ENCODE measurements at regions of chr11 and their contacts with region 1.

Region 1: DNA sequence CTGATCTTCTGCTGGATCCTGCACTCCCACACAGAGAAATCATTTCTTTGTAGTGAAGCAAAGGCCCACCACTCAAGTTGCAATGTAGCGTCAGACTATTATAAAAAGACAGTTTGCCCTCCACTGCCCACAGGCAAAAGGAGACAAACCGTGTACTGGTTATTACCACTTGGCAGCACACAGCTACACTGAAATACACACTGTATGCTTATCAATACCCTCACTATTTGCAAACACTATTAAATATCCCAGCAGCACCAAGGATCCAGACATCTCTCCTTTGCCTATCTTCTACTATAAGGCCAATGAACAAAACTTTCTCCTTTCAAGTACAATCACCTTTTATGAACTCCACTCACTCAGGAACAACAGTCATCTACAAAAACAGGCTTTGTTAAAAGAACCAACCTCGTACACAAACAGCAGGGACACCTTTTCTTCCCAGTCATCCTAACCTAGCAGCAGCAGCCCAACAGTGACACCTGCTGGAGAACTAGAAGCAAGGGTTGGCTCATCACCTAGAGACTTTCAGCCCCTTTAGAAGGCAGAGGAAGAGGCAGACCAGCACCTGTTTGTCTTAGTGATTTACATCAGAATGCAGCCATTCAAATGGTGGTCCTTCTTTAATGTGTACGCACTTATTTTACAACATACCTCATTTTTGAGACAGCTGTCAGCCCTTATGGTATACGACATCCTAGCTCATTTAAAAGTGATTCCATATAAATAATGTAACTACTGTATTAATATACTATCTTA is 56.1 kb downstream of the AMBRA1 start:
- DNase-seq: peak; percentile 44 to 55 (median 54)
- H3K4me3 ChIP-seq: no peak overlapping the region
- H3K4me3 Mint-ChIP-seq: no peak overlapping the region
- H3K27ac ChIP-seq: no peak overlapping the region
- H3K27ac Mint-ChIP-seq: peak overlapping the region in 1 of 7 donors; percentile 22
- H3K4me1 ChIP-seq: peaks cover 5 to 6% of the 10 kb centered on the region in 2 donors
- H3K4me1 Mint-ChIP-seq: peaks cover 19% of the 10 kb centered on the region
- H3K27me3 ChIP-seq: no peaks in the 10 kb centered on the region
- H3K27me3 Mint-ChIP-seq: peaks cover 0 to 5% (median 1%) of the 10 kb centered on the region in 3 donors
- CTCF ChIP-seq: peak; percentile 89

Region 2: DNA sequence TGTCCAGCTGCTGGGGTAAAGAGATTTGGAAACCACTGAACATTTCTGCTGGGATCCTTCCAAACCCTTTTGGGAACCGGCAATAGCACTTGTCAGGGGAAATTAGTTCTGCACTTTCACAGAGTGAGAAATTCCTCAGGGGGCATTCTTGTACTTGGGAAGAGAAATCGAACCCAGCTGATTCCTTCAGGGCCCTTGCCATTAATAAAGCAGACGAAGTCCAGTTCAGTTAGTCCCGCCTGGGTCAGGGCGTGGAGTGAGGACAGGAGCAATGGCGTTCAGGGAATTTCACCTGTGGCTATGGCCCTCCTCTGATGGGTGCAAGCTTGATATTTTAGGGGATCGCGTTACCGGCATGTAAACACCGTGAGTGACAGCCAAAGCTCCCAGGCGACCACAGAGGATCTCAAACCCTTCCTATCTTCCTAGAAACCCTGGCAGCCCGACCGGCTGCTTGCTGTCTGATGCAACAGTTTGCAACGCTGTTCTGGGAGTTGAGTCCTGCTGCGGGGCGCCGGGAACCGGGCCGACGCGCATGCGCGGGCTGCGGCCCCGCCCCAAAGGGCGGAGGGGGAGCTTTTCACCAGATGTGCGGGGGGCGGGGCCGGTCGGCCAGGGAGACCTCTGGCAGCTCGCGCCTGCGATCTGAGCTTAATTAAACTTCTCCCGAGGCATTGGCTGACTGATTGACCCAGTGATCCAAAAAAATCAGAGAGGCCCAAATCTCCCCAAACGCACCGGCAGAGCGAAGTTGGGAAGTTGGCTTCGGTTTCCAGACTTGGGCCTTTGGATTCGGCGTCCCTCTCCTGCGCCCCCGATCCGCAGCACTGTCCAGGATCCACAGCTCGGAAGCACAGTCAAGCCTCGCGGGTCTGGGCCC is 294.6 kb before region 1 on chr11:
- intact Hi-C with region 1: no loop called
- DNase-seq: peak; percentile 72 to 80 (median 77)
- H3K4me3 ChIP-seq: peak overlapping the region; percentile 18 to 83 (median 51)
- H3K4me3 Mint-ChIP-seq: peak overlapping the region; percentile 84 to 94
- H3K27ac ChIP-seq: peak overlapping the region in 1 of 2 donors; percentile 42
- H3K27ac Mint-ChIP-seq: peak overlapping the region in 5 of 7 donors; percentile 37 to 81 (median 50)
- H3K4me1 ChIP-seq: peaks cover 25 to 30% of the 10 kb centered on the region in 2 donors
- H3K4me1 Mint-ChIP-seq: peaks cover 29% of the 10 kb centered on the region
- H3K27me3 ChIP-seq: no peaks in the 10 kb centered on the region
- H3K27me3 Mint-ChIP-seq: peaks cover 0 to 4% (median 2%) of the 10 kb centered on the region in 3 donors
- CTCF ChIP-seq: no peak

Region 3: DNA sequence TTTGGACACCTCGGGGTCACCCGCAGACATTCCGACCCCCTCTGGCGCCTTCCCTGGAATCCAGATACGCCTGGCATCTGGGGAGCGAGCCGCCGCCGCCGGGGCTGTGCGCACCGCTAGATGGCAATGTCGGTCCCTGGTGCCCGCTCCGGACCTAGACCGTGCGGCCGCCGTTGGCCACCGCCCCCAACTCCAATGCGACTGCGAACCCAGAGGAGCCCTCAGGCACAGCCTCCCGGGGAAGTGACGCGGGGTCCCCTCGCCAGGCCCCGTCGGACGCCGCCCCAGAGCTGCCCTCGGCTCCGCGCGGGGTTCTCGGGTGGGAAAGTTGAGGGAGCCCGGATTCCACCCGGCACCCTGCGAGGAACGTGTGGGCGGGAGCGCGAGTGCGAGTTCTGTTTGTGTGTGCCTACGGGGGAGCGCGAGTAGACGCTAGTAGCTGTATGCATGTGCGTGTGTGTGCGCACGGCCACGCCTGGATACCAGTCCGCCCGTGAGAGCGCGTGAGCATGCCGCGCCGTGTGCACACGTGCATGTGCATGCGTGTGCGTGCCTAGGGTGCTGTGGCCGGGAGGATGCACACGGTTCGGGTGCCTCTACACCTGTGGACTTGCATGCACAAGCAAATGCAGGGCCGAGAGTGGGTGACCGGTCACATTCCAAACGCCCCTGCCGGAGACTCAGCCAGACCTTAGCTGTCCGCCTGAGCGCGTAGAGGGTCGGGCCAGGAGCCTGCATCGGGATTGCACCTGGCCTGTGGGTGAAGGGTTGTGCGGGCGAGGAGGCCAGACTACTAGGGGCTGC is 148.1 kb before region 1 on chr11:
- intact Hi-C with region 1: loop called (anchors 2 to 10 kb)
- DNase-seq: peak; percentile 38 to 54 (median 46)
- H3K4me3 ChIP-seq: peak overlapping the region in 1 of 3 experiments; percentile 62
- H3K4me3 Mint-ChIP-seq: peak overlapping the region; percentile 47 to 86
- H3K27ac ChIP-seq: no peak overlapping the region
- H3K27ac Mint-ChIP-seq: no peak overlapping the region
- H3K4me1 ChIP-seq: peaks cover 31 to 56% of the 10 kb centered on the region in 2 donors
- H3K4me1 Mint-ChIP-seq: peaks cover 42% of the 10 kb centered on the region
- H3K27me3 ChIP-seq: peaks cover 42 to 63% of the 10 kb centered on the region in 2 donors
- H3K27me3 Mint-ChIP-seq: peaks cover 63 to 86% (median 73%) of the 10 kb centered on the region in 3 donors
- CTCF ChIP-seq: peak; percentile 89

Region 4: DNA sequence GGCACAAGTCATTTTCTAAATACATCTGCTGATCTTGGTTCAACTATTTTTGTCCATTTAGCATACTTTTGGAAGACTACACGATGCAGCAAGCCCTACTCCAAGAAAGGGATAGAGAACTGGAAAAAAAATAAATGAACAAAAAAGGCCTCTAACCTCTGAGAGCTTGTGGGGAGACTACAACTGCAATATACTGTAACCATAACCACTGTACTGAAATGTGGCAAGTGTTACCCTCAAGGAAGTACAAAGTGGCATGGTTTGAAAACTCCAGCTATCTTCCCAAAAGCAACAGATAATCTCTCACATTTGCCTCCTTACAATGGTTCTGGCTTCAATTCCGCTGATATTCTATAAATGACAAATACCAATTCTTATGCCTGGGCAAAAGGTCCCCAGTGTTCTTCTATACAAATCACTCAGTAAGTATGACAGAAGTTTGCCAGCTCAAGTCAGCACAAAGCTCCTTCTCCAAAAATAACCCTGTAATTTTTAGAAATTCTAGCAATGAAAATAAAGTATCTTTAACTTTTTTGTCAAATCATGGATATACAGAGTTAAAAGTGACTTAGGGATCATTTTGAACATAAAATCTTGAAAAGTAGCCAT is 33.2 kb after region 1 on chr11:
- intact Hi-C with region 1: no loop called
- DNase-seq: no peak
- H3K4me3 ChIP-seq: no peak overlapping the region
- H3K4me3 Mint-ChIP-seq: no peak overlapping the region
- H3K27ac ChIP-seq: no peak overlapping the region
- H3K27ac Mint-ChIP-seq: peak overlapping the region in 2 of 7 donors; percentile 16 to 25
- H3K4me1 ChIP-seq: no peaks in the 10 kb centered on the region
- H3K4me1 Mint-ChIP-seq: peaks cover 8% of the 10 kb centered on the region
- H3K27me3 ChIP-seq: no peaks in the 10 kb centered on the region
- H3K27me3 Mint-ChIP-seq: no peaks in the 10 kb centered on the region
- CTCF ChIP-seq: no peak

Region 5: GRCh38 chr11:46970913-46971625 is 433.4 kb after region 1 on chr11:
- intact Hi-C with region 1: no loop called
- DNase-seq: no peak
- H3K4me3 ChIP-seq: no peak overlapping the region
- H3K4me3 Mint-ChIP-seq: no peak overlapping the region
- H3K27ac ChIP-seq: no peak overlapping the region
- H3K27ac Mint-ChIP-seq: peak overlapping the region in 1 of 7 donors; percentile 8
- H3K4me1 ChIP-seq: peaks cover 9 to 14% of the 10 kb centered on the region in 2 donors
- H3K4me1 Mint-ChIP-seq: peaks cover 15% of the 10 kb centered on the region
- H3K27me3 ChIP-seq: no peaks in the 10 kb centered on the region
- H3K27me3 Mint-ChIP-seq: no peaks in the 10 kb centered on the region
- CTCF ChIP-seq: no peak

Measured in CD14-positive monocyte (primary cell).